Right ventricle myocardium superior (tissue), 1 donor: ENCODE measurements at regions of chr14 and their contacts with region 1.

Region 1: DNA sequence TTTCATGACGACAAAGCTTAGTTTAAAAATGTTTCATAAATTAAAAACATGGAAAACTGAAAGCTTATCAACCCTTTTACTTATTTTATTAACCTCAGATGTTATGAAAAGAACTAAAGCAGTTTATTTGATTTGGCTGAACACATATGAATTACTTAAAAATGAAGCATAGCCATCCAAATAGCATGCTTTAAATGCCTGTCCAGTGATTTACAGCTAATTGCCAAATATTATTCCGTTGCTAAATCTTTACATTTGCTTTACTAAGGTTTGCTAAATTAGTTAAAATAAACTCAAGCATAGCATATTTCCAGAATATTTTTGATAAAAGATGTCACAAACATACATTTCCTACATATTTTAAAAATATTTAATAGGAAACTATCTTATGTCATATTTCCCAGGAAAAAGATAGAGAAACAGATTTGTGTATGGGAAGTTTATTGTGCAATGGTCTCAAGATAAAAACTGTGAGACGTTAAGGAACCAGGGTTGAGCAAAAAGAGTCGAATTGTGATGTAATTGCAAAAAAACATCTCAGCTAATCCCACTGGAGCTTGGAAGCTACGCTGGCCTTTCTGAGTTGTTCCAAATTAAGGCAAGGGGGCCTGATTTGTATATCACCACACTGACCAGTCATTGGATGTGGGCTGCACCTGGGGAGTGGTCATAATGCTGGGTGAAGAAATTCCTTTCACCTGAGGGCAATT is 25.8 kb downstream of the GPR135 start:
- DNase-seq: no peak
- ATAC-seq: peak; percentile 63

Region 2: DNA sequence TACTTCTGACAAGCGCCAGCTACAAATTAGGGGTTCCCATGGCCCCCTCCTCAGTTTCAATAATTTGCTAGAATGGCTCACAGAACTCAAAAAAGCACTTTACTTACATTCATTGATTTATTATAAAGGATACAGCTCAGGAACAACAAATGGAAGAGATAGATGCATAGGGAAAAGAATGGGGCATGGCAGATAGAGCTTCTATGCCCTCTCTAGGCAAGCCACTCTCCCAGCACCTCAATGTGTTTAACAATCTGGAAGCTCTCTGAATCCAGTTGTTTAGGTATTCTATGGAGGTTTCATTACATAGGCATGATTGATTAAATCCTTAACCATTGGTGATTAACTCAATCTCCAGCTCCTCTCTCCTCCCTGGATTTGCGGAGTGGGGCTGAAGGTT is 435.4 kb before region 1 on chr14:
- intact Hi-C with region 1: no loop called
- DNase-seq: no peak
- ATAC-seq: no peak

Region 3: GRCh38 chr14:59126710-59127432 is 312.5 kb before region 1 on chr14:
- intact Hi-C with region 1: loop called (anchors 2 kb)
- DNase-seq: no peak
- ATAC-seq: peak; percentile 91

Region 4: GRCh38 chr14:59358105-59358504 is 81.3 kb before region 1 on chr14:
- intact Hi-C with region 1: no loop called
- DNase-seq: peak; percentile 72
- ATAC-seq: peak; percentile 86

Region 5: GRCh38 chr14:59484639-59485175 is 45.3 kb after region 1 on chr14:
- intact Hi-C with region 1: no loop called
- DNase-seq: no peak
- ATAC-seq: peak; percentile 65